MCF 10A (cell line): ENCODE measurements at regions of chr2 and their contacts with region 1.

Region 1: GRCh38 chr2:44087036-44087713 is 81.5 kb upstream of the PPM1B start:
- DNase-seq: peak; percentile 78
- H3K4me3 Mint-ChIP-seq: peak overlapping the region; percentile 61
- H3K27ac Mint-ChIP-seq: peak overlapping the region; percentile 46
- H3K4me1 Mint-ChIP-seq: peaks cover 5% of the 10 kb centered on the region
- H3K27me3 Mint-ChIP-seq: no peaks in the 10 kb centered on the region
- CTCF ChIP-seq: peak; percentile 89

Region 2: GRCh38 chr2:44098050-44098449 is 10.9 kb after region 1 on chr2:
- CTCF ChIA-PET with region 1: interaction called, 14 read pairs
- POLR2A ChIA-PET with region 1: interaction called, 4 read pairs
- intact Hi-C with region 1: no loop called
- DNase-seq: no peak
- H3K4me3 Mint-ChIP-seq: no peak overlapping the region
- H3K27ac Mint-ChIP-seq: no peak overlapping the region
- H3K4me1 Mint-ChIP-seq: peaks cover 14% of the 10 kb centered on the region
- H3K27me3 Mint-ChIP-seq: no peaks in the 10 kb centered on the region
- CTCF ChIP-seq: no peak

Region 3: GRCh38 chr2:44167940-44168680 is 80.9 kb after region 1 on chr2:
- CTCF ChIA-PET with region 1: interaction called, 4 read pairs
- POLR2A ChIA-PET with region 1: interaction called, 8 read pairs
- intact Hi-C with region 1: loop called (anchors 1 kb)
- DNase-seq: peak; percentile 100
- H3K4me3 Mint-ChIP-seq: peak overlapping the region; percentile 93
- H3K27ac Mint-ChIP-seq: peak overlapping the region; percentile 99
- H3K4me1 Mint-ChIP-seq: peaks cover 11% of the 10 kb centered on the region
- H3K27me3 Mint-ChIP-seq: no peaks in the 10 kb centered on the region
- CTCF ChIP-seq: no peak

Region 4: DNA sequence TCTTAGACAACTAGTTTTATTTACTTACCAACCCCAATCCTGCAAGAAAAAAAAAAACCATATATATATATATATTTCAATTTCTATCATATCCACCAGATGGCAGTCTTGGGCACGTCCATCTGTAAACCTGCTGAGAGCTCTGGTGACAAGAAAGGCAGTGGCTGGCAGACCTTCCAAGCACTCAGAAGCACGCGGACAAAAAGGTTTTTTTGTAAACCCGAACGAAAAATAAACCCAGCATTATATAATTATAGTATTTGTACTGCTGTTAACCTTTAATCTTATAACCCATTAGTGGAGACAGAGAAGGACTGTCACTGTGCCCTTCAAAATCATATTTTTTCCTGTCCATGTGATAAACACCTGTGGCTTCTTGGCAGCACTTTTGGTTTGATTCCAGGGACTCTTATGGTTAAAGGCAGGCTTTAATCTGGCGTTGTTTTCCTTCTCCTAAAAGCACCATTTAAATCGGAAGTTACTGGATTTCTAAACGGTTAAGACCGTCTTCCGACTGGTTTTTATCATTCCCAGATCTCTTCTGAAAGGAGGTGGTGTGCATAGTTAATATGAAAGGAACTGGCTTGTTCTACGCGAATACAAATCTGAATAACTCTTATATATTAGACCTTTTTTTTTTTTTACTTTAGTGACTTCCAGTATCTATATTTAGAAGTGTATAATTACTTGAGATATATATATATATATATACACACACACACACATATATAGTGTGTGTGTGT is 157.1 kb after region 1 on chr2:
- CTCF ChIA-PET with region 1: interaction called, 6 read pairs
- POLR2A ChIA-PET with region 1: no interaction called
- intact Hi-C with region 1: loop called (anchors 1 kb)
- DNase-seq: peak; percentile 74
- H3K4me3 Mint-ChIP-seq: peak overlapping the region; percentile 43
- H3K27ac Mint-ChIP-seq: no peak overlapping the region
- H3K4me1 Mint-ChIP-seq: peaks cover 14% of the 10 kb centered on the region
- H3K27me3 Mint-ChIP-seq: no peaks in the 10 kb centered on the region
- CTCF ChIP-seq: peak; percentile 43

Region 5: DNA sequence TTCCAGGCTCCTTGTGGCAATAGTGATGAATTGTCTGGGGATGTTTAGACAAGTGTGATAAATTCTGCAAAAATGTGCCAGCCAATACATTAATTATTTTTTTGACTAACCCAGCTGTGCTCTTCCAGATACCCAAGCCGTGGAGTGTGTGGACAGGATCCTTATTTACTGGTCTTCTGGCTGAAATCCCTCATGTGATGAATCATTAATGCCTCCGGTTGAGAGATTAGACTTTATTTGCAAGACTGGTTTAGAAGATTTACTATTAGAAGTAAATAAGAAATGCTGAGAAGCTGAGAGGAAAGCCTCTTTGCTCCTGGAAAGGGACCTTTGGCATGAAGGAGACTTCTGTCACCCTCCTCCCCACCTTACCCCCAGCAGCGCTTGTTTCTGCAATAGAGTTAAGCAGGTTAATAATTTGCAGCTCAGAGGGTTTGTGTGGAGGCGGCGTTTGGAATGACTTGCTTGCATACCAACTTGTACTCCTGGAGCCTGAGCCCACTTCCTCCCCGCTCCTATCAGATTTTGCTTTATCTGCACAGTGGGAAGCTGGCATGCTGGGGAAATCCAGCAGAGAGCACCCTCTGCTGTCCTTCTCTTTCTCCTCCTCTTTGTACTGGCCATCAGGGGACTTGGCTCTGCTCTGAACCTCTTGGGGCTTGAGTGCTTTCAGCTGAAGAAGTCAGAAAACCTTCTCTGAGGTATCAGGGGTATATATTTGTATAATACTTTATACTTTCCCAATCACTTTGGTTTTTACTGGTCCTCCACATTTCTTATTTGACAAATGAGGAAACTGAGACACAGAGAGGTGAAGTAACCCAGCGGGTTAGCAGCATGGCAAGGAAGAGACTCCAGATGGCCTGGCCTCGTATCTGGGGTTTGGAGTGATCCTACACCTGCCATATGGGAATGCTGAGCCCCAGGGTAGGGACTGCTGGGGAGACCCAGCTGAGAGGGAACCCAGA is 204.4 kb after region 1 on chr2:
- CTCF ChIA-PET with region 1: no interaction called
- POLR2A ChIA-PET with region 1: no interaction called
- intact Hi-C with region 1: loop called (anchors 1 kb)
- DNase-seq: peak; percentile 56
- H3K4me3 Mint-ChIP-seq: no peak overlapping the region
- H3K27ac Mint-ChIP-seq: no peak overlapping the region
- H3K4me1 Mint-ChIP-seq: peaks cover 26% of the 10 kb centered on the region
- H3K27me3 Mint-ChIP-seq: no peaks in the 10 kb centered on the region
- CTCF ChIP-seq: peak; percentile 45